Lower leg skin (tissue), 4 donors: ENCODE measurements at regions of chr12 and their contacts with region 1.

Region 1: GRCh38 chr12:98678259-98678945 is 33.3 kb downstream of the APAF1 start:
- DNase-seq: no peak
- H3K4me3 ChIP-seq: no peak overlapping the region
- CTCF ChIP-seq: no peak
- POLR2A ChIP-seq: no peak

Region 2: DNA sequence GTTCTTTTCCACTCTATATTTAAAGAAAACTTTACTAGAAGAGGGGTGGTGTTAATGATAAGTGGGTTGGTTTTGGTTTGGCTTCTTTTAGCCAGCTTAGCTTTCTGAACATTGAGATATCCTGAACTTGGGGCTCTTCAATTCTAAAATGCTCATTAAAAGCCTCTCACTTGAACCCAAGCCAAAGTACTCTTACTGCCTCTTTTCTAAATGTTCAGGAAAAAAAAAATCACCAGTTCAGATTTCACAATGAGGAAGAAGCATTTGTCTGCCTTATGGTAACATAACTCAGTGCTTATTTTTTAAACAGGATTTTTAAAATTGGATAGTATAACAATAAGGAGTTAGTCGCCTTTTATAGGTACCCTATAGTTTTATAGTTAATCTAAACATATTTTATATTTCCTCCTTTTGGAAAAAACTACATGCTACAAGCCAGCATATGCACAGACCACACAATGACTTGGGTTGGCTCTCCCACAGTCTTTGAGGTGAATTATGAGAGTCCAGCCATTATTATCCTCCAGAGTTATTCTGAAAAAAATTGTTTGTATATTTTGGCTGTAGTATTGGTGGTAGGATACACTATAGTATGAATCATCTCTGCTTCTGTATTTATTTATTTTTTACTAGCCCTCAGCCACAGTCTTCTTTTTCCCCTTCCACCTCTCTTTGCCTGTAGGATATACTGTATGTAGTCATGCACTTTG is 358.5 kb before region 1 on chr12:
- intact Hi-C with region 1: no loop called
- DNase-seq: no peak
- H3K4me3 ChIP-seq: no peak overlapping the region
- CTCF ChIP-seq: no peak
- POLR2A ChIP-seq: no peak

Region 3: GRCh38 chr12:98660521-98660920 is 17.9 kb before region 1 on chr12:
- intact Hi-C with region 1: loop called (anchors 1 kb)
- DNase-seq: no peak
- H3K4me3 ChIP-seq: no peak overlapping the region
- CTCF ChIP-seq: no peak
- POLR2A ChIP-seq: no peak

Region 4: GRCh38 chr12:98870504-98870903 is 192.1 kb after region 1 on chr12:
- intact Hi-C with region 1: no loop called
- DNase-seq: no peak
- H3K4me3 ChIP-seq: no peak overlapping the region
- CTCF ChIP-seq: no peak
- POLR2A ChIP-seq: no peak

Region 5: DNA sequence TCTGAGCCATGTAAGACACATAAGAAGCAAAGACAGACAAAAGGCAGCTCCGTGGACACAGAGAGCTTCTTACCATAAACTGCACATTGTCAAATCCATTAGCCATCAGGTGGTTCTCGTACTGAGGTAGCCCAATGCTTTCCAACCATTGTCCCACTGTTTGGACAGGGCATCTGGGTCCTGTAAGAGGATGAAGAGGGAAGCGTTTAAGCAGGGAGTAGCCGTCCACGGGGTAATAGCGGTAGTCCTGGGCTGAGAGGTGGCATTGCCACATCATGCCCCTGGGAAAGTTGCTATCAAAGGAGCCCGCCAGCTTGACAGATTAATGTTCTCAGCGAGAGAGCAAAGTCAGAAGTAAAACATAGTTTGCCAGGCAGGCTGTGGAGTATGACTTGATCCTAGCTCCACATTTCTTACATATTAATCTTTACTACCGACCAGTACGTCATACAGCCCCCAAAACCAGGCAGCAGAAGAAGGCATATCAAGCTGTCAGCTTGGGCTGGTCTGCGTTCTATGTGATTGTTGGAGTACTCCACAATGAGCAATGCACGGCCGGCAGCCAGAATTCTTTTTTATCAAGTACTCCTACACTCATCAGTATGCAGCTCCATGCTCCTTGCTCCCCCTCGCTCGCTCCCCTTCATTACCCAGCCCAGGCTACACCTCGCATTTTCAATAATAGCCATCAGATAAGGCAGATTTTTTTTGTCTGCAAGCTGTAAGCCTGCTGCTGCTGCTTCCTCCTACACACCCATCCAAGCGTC is 476.0 kb after region 1 on chr12:
- intact Hi-C with region 1: no loop called
- DNase-seq: no peak
- H3K4me3 ChIP-seq: no peak overlapping the region
- CTCF ChIP-seq: no peak
- POLR2A ChIP-seq: no peak

Region 6: GRCh38 chr12:99444859-99445316 is 766.5 kb after region 1 on chr12:
- intact Hi-C with region 1: no loop called
- DNase-seq: no peak
- H3K4me3 ChIP-seq: no peak overlapping the region
- CTCF ChIP-seq: no peak
- POLR2A ChIP-seq: no peak